Sciatic nerve (tissue), 2 donors: ENCODE measurements at regions of chr22 and their contacts with region 1.

Region 1: DNA sequence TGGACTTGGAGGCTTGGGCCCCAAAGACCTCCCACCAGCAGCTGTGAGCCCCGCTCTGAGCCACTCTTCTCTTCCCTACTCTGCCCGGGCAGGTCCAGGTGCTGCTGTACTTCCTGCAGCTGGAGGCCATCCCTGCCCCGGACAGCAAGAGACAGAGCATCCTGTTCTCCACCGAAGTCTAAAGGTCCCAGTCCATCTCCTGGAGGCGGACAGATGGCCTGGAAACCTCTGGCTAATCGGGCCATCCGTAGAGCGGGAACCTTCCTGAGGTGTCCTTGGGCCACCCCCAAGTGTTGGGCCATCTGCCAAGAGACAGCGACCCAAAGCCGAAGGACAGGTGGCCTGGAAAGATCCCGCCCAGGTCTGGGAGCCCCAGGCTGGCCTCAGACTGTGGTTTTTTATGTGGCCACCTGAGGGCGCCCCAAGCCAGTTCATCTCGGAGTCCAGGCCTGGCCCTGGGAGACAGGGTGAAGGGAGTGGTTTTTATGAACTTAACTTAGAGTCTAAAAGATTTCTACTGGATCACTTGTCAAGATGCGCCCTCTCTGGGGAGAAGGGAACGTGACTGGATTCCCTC is 135.1 kb downstream of the BCR start:
- DNase-seq: peak; percentile 89
- ATAC-seq: peak; percentile 64

Region 2: DNA sequence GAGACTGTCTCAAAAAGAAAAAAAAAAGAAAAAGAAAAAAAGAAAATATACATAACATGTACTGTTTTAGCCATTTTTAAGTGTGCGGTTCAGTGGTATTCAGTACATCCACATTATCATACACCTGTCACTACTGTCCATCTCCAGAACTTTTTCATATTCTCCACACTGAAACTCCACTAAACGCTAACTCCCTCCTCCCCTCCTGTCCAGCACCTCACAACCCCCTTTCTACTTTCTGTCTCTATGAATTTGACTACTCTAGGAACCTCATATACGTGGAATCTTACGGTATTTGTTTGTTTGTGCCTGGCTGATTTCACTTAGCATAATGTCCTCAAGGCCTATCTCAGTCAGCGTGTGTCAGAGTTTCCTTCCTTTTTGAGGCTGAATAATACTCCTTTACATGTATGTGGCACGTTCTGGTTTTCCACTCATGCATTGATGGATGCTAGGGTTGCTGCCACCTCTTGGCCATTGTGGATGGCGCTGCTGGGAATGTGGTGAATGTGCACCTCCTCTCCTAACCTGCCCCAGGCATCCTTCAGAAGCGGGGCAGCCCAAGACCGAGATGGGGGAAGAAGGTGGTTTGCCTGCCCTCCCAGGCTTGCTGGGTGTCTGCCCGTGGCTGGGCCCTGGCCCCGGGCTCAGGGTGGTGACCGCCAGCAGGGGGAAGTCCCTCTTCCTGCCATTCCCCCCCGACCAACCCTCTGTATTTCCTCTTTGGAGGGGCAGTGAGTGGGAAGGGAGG is 74.6 kb before region 1 on chr22:
- intact Hi-C with region 1: no loop called
- DNase-seq: no peak
- ATAC-seq: no peak

Region 3: DNA sequence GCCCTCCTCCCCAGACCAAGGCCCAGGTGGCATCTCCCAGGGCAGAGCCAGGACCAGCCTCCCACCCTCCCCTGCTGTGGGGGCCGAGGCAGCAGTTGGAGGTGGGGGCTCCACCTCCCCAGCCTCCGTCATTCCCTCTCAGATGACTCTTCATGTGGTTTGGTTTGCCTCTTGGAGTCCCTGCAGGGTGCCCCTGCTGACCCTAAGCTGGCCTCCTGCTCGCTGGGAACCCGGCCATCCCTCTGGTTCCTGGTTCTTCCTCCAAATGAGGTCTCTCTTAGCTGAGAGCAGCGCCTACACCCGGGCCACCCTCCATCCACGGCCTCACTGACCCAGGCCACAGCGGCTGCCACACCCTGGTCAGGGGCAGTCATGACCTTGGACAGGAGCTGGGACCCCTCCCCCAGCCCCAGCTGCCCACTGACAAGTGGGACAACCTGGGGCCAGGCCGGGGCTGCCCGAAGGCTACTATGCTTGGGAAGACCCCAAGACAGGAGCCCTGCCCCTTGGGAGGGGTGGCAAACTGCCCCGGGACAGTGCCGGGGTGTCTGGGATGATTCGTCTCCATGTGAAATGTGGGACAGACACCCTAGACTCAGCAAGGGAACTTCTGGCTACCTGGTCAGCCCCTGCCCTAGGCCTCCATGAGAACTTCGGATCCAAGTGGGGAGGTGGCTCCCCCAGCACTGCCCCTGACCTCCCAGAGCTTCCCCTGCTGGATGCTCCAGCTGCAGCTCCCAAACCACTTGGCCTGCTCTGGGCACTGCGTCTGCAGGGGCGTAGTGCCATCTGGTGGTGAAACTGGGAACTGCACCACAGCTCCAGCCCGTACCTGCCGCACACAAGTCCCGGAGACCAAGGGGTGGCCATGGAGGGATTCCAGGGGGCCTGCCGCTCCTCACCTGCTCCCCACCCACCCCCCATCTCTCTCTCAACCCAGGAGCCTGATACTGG is 70.1 kb after region 1 on chr22:
- intact Hi-C with region 1: loop called (anchors 10 kb)
- DNase-seq: peak; percentile 94
- ATAC-seq: peak; percentile 86

Region 4: DNA sequence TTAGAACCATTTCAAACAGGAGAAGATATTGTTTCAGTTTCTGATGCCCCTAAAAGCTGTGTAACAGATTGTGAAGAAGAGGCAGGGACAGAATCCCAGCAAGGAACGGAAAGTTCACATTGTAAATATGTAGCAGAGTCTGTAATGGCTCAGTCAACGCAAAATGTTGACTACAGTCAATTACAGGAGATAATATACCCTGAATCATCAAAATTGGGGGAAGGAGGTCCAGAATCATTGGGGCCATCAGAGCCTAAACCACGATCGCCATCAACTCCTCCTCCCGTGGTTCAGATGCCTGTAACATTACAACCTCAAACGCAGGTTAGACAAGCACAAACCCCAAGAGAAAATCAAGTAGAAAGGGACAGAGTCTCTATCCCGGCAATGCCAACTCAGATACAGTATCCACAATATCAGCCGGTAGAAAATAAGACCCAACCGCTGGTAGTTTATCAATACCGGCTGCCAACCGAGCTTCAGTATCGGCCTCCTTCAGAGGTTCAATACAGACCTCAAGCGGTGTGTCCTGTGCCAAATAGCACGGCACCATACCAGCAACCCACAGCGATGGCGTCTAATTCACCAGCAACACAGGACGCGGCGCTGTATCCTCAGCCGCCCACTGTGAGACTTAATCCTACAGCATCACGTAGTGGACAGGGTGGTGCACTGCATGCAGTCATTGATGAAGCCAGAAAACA is 223.9 kb after region 1 on chr22:
- intact Hi-C with region 1: loop called (anchors 10 kb)
- DNase-seq: peak; percentile 87
- ATAC-seq: peak; percentile 96